RWPE1 (cell line): ENCODE measurements at regions of chr22 and their contacts with region 1.

Region 1: GRCh38 chr22:38872172-38872830 is at the start of gene CBX6:
- DNase-seq: peak; percentile 90
- H3K27ac ChIP-seq: peak within 1 kb of the TSS; percentile 79
- CTCF ChIP-seq: no peak

Region 2: DNA sequence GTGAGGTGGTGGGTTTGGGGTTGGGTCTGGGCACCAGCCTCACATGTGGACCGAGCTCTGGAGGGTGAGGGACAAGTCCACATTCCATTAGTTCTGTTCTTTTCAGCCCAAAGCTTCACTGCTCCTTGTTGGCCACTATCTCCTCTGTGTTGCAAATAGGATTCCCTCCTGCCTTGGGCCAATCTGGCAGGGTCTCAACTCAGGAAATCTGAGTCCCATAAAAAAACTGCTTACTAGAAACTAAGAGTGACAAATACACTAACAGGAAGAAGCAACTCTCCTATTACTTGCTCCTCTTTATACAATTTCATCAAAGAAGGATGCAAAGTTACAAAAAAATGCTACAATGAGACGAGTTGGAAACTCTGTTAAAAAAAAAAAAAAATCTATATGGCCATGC is 488.9 kb before region 1 on chr22:
- CTCF ChIA-PET with region 1: no interaction called
- POLR2A ChIA-PET with region 1: no interaction called
- DNase-seq: no peak
- H3K27ac ChIP-seq: no peak overlapping the region
- CTCF ChIP-seq: no peak

Region 3: GRCh38 chr22:38767313-38767712 is 105.0 kb before region 1 on chr22:
- CTCF ChIA-PET with region 1: interaction called, 11 read pairs
- POLR2A ChIA-PET with region 1: no interaction called
- DNase-seq: no peak
- H3K27ac ChIP-seq: no peak overlapping the region
- CTCF ChIP-seq: no peak

Region 4: DNA sequence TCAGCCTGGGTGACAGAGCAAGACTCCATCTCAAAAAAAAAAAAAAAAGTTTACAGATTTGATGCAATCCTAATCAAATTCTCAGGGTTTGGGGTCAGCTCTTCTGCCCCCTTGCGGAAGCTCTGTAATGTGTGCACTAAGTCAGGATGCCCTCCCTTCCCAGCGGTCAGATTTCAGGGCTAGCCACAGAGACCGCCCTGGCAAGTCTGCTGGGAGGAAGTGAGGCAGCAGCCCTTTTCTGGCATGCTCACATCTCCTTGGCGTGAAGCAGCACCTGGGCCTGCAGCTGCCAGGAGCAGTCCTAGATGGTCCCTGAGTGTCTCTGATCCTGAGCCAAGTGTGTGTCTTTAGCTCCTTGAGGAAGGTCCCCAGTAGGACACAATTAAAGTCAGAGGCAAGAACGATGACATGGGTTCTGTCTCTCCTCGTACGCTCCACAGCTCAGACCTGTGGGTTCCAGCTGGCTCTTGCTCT is 130.9 kb after region 1 on chr22:
- CTCF ChIA-PET with region 1: interaction called, 14 read pairs
- POLR2A ChIA-PET with region 1: no interaction called
- DNase-seq: peak; percentile 73
- H3K27ac ChIP-seq: peak overlapping the region; percentile 51
- CTCF ChIP-seq: peak; percentile 82